SK-N-SH (cell line): ENCODE measurements at regions of chr7 and their contacts with region 1.

Region 1: GRCh38 chr7:41716691-41717090 is 13.8 kb upstream of the INHBA start:
- DNase-seq: no peak
- H3K4me3 ChIP-seq: no peak overlapping the region
- H3K27ac ChIP-seq: no peak overlapping the region
- H3K4me1 ChIP-seq: no peaks in the 10 kb centered on the region; a peak in 1 of 4 replicates
- H3K27me3 ChIP-seq: no peaks in the 10 kb centered on the region
- CTCF ChIP-seq: no peak
- EP300 ChIP-seq: no peak
- RAD21 ChIP-seq: no peak

Region 2: GRCh38 chr7:41731492-41732435 is 15.1 kb after region 1 on chr7:
- CTCF ChIA-PET with region 1: interaction called, 13 read pairs
- POLR2A ChIA-PET with region 1: no interaction called
- DNase-seq: no peak
- H3K4me3 ChIP-seq: no peak overlapping the region; a peak in 1 of 4 replicates
- H3K27ac ChIP-seq: no peak overlapping the region
- H3K4me1 ChIP-seq: peaks cover 0 to 4% of the 10 kb centered on the region in 2 experiments; a peak in 1 of 4 replicates
- H3K27me3 ChIP-seq: no peaks in the 10 kb centered on the region
- CTCF ChIP-seq: peak; percentile 84
- EP300 ChIP-seq: no peak
- RAD21 ChIP-seq: peak; percentile 77